ENCODE measurements at regions of chr13 and their contacts with region 1.

Region 1: DNA sequence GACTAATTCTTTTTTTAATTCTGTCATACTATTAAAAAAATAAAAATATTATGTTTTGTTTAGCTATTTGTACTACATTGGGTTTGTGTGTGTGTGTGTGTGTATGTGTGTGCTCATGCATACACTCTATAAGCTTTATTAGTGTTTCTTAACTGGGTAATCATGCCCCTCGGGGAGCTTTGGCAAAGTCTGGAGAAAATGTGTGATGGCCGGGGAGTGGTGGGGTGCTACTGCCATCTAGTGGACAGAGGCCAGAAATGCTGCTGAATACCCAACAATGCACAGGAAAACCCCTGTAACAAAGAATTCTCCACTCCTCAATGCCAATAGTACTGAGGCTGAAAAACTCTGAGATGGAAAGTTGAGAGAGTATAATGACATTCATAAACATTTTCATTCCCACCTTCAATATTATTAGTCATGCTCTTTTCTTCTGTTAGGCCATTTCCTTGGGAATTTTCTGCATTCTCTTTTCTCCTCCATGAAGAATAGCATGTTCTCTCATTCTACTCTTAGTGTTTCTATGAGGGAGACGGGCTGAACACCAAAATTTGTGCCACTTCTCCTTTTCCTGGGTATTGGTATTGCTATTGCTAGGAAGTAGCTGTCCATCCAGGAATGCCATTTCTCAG is 157.3 kb downstream of the DNAJC3 start:
- DNase-seq: peak; percentile 93
- H3K4me3 Mint-ChIP-seq: no peak overlapping the region
- H3K27ac Mint-ChIP-seq: peak overlapping the region; percentile 42
- H3K4me1 Mint-ChIP-seq: peaks cover 19% of the 10 kb centered on the region
- H3K27me3 Mint-ChIP-seq: no peaks in the 10 kb centered on the region
- CTCF ChIP-seq: peak; percentile 97

Region 2: DNA sequence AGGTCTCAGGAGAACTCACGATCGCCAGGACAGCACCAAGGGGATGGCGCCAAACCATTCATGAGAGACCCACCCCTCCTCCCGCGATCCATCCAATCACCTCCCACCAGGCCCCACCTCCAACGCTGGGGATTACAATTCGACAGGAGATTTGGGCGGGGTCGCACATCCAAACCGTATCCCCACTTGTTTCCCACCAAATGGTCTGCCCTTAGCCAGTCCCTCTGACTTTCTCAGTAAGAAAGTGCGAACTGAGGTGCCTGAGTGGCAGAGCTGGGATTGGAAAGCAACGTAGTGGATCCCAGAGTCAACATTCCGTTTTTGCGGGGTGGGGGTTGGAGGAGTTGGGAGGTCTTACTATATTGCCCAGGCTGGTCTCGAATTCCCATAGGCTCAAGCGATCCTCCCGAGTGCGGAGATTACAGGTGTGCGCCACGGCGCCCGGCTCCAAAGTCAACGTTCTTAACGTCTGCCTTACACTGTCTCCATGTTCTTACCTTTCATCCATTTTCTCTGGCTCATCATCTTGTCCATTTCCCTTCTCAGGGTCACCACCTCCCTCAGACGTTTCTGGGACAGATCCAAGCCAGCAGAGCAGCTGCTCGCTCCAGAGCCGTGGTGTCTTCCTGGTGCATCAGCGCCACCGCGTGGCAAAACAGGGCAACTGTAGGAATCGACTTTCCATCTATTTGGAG is 430.3 kb before region 1 on chr13:
- CTCF ChIA-PET with region 1: interaction called, 17 read pairs
- POLR2A ChIA-PET with region 1: no interaction called
- intact Hi-C with region 1: loop called (anchors 5 kb)
- DNase-seq: peak; percentile 88
- H3K4me3 Mint-ChIP-seq: peak overlapping the region; percentile 53
- H3K27ac Mint-ChIP-seq: no peak overlapping the region
- H3K4me1 Mint-ChIP-seq: peaks cover 6% of the 10 kb centered on the region
- H3K27me3 Mint-ChIP-seq: no peaks in the 10 kb centered on the region
- CTCF ChIP-seq: peak; percentile 99

Region 3: DNA sequence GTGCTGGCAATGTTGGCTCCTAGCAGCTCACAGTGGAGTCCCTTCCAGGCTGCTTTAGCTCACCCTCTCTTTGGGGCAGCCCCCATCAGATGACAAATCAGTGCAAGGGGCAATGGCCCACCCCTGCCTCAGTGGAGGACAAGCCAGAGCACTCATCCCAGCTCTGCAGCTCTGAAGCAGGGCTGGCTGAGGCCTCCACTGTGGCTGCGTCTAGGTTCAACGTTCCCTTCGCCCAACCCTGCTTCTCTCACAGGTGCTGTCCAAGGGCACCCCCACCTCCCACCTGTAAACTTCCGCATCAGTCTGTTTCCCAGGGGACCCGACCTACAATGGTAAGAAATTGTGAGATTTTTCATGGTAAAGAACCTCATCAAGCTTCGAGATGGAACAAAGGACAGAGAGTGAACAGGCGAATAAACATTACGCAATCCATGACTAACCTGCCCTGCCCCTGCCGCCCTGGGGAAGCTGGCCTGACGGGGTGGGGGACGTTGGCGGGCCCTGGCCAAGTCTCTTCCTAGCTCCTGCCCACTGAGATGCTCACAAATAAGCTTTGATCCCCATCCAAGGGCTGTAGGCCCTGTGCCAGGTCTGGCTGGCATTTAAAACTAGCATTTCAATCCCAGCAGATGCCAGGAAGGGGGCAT is 230.2 kb before region 1 on chr13:
- CTCF ChIA-PET with region 1: interaction called, 14 read pairs
- POLR2A ChIA-PET with region 1: no interaction called
- intact Hi-C with region 1: no loop called
- DNase-seq: peak; percentile 97
- H3K4me3 Mint-ChIP-seq: peak overlapping the region; percentile 26
- H3K27ac Mint-ChIP-seq: peak overlapping the region; percentile 85
- H3K4me1 Mint-ChIP-seq: peaks cover 56% of the 10 kb centered on the region
- H3K27me3 Mint-ChIP-seq: no peaks in the 10 kb centered on the region
- CTCF ChIP-seq: no peak

Region 4: DNA sequence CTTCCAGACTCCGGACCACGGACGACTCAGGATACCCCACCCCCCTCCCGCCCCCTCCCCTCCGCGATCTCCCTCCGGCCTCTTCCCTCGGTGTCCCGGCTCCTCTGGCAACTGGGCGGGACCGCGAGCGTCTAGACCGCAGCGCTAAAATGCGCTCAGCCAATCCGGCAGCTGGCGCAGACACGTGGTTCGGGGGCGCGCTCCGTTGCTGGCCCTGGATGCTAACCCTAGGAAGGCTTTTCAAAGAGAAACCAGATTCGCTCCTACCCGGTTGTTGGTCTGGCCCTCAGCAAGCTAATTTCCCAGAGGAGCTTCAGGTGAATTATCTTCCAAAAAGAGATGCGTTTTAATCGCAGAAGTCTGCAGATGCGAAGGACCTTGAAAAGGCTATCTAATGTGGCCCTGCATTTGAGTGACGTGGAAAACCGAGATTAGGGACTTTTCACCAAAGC is 189.6 kb before region 1 on chr13 and contains the start of gene DZIP1:
- CTCF ChIA-PET with region 1: interaction called, 16 read pairs
- POLR2A ChIA-PET with region 1: interaction called, 4 read pairs
- intact Hi-C with region 1: no loop called
- DNase-seq: peak; percentile 80
- H3K4me3 Mint-ChIP-seq: peak within 1 kb of the TSS; percentile 82
- H3K27ac Mint-ChIP-seq: no peak within 1 kb of the TSS
- H3K4me1 Mint-ChIP-seq: peaks cover 5% of the 10 kb centered on the region
- H3K27me3 Mint-ChIP-seq: no peaks in the 10 kb centered on the region
- CTCF ChIP-seq: no peak
- total RNA-seq, gene DZIP1: 16.4 and 22.1 TPM in 2 replicates

Region 5: DNA sequence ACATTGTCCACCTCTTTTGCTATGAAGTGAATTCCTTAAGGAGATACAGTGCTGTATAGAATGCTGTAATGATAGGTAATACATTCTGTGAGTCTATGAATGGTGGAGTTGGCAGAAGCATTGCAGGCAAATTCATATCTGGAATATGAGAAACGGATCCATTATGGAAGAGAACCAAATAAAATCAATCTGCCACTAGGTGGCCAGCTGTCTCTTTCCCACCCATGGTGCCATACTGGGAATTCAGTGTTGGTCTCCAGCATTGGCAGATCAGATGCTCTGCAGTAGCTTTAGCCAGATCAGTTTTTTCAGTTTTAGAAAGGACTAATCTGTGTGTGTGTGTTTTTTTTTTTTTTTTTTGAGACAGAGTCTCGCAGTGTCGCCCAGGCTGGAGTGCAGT is 129.7 kb before region 1 on chr13:
- CTCF ChIA-PET with region 1: interaction called, 15 read pairs
- POLR2A ChIA-PET with region 1: interaction called, 4 read pairs
- intact Hi-C with region 1: no loop called
- DNase-seq: peak; percentile 62
- H3K4me3 Mint-ChIP-seq: no peak overlapping the region
- H3K27ac Mint-ChIP-seq: no peak overlapping the region
- H3K4me1 Mint-ChIP-seq: peaks cover 34% of the 10 kb centered on the region
- H3K27me3 Mint-ChIP-seq: no peaks in the 10 kb centered on the region
- CTCF ChIP-seq: peak; percentile 16

Region 6: DNA sequence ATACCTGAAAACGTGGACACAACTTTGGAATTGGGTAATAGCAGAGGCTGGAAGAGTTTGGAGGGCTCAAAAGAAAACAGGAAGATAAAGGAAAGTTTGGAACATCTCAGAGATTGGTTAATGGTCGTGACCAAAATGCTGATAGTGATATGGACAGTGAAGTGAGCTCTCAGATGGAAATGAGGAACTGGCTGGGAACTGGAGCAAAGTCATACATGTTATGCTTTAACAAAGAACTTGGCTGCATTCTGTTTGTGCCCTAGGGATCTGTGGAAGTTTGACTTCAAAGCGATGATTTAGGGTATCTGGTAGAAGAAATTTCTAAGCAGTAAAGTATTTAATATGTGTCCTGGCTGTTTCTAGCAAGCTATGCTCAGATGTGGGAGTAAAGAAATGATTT is 21.1 kb before region 1 on chr13:
- CTCF ChIA-PET with region 1: interaction called, 20 read pairs
- POLR2A ChIA-PET with region 1: interaction called, 5 read pairs
- intact Hi-C with region 1: no loop called
- DNase-seq: no peak
- H3K4me3 Mint-ChIP-seq: no peak overlapping the region
- H3K27ac Mint-ChIP-seq: no peak overlapping the region
- H3K4me1 Mint-ChIP-seq: no peaks in the 10 kb centered on the region
- H3K27me3 Mint-ChIP-seq: no peaks in the 10 kb centered on the region
- CTCF ChIP-seq: no peak

Measured in MCF 10A (cell line).